SK-N-SH (cell line): ENCODE measurements at regions of chr19 and their contacts with region 1.

Region 1: DNA sequence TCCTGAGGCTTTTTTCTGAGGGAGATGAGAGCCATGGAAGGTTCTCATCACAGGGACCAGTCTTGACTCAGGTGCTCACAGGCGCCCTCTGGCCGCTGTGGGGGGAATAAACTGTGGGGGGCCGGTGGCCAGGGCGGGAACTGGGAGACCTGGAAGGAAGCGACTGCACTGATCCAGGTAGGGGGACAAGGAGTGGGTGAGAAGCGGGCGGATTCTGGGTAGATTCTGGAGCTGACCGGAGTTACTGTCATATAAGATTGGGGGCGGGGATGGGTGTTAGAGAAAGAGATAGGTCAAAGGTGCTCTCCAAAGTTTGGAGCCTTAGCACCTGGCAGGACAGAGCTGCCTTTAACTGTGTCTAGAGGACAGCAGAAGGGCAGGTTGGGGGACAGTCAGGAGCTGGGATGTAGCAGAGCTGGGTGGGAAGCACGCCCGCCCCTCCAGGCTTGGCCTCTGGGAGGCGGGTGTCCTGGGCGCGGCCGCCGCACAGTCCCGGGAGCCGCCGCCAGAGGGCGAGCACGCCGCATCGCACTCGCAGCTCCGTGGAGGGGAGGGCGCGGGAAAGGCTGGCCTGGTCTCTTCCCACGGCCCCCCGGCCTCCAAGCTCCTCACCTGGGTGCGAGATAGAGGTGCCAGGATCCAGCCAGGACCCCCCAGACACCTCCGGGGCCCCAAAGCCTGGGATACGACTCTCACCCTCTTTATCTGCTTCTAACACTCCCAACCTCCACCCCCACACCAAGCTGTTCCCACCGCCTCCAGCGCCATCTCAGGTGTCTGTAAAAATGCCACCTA is 4.2 kb upstream of the DAND5 start:
- DNase-seq: peak; percentile 89
- H3K4me3 ChIP-seq: peak overlapping the region; percentile 48 to 63
- H3K27ac ChIP-seq: peak overlapping the region; percentile 59 to 75
- H3K4me1 ChIP-seq: peaks cover 6 to 14% of the 10 kb centered on the region in 2 experiments; a peak in 3 of 4 replicates
- H3K27me3 ChIP-seq: no peaks in the 10 kb centered on the region
- CTCF ChIP-seq: peak; percentile 78
- EP300 ChIP-seq: no peak
- RAD21 ChIP-seq: peak; percentile 79

Region 2: GRCh38 chr19:12821761-12822160 is 143.5 kb before region 1 on chr19:
- CTCF ChIA-PET with region 1: no interaction called
- POLR2A ChIA-PET with region 1: no interaction called
- DNase-seq: no peak
- H3K4me3 ChIP-seq: no peak overlapping the region
- H3K27ac ChIP-seq: no peak overlapping the region
- H3K4me1 ChIP-seq: no peaks in the 10 kb centered on the region; a peak in 1 of 4 replicates
- H3K27me3 ChIP-seq: no peaks in the 10 kb centered on the region
- CTCF ChIP-seq: no peak
- EP300 ChIP-seq: no peak
- RAD21 ChIP-seq: no peak

Region 3: GRCh38 chr19:12868540-12869098 is 96.6 kb before region 1 on chr19:
- CTCF ChIA-PET with region 1: no interaction called
- POLR2A ChIA-PET with region 1: no interaction called
- DNase-seq: peak; percentile 63
- H3K4me3 ChIP-seq: no peak overlapping the region
- H3K27ac ChIP-seq: no peak overlapping the region
- H3K4me1 ChIP-seq: no peaks in the 10 kb centered on the region
- H3K27me3 ChIP-seq: no peaks in the 10 kb centered on the region
- CTCF ChIP-seq: no peak
- EP300 ChIP-seq: no peak
- RAD21 ChIP-seq: no peak

Region 4: DNA sequence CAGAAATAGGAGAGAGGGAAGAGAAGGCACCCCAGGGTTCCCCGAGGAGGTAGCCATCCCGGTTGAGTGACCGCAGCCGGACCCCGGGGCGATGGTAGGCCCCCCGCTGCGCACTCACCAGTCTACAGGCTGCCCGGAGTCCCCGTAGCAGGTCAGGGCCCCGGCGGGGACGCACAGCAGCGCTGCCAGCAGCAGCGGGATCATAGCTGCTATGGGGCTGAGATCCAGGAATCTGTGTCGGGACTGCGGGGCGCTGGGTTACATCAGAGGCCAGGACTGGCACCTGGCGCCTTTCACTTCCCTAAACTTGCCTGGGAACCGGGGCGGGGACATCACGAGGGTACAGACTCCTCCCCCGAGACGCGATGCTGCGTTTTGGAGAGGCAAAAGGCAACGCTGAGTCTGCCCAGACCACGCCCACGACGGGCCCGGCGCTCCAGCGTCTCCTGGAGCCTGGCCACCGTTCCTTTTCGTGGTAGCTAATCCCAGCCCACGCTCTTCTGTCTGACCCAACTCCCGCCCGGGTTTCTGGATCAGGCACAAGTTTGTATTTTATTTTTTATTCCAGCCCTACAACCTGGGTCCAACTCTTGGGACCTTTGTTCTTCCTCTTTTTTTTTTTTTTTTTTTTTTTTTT is 83.9 kb before region 1 on chr19 and contains the start of gene DNASE2:
- CTCF ChIA-PET with region 1: interaction called, 28 read pairs
- POLR2A ChIA-PET with region 1: interaction called, 4 read pairs
- DNase-seq: peak; percentile 95
- H3K4me3 ChIP-seq: peak within 1 kb of the TSS; percentile 68 to 86
- H3K27ac ChIP-seq: peak within 1 kb of the TSS; percentile 71 to 76
- H3K4me1 ChIP-seq: peaks cover 0 to 9% of the 10 kb centered on the region in 2 experiments; a peak in 1 of 4 replicates
- H3K27me3 ChIP-seq: peaks cover 11% of the 10 kb centered on the region; the same call in 1 of the 2 replicates
- CTCF ChIP-seq: no peak
- EP300 ChIP-seq: no peak
- RAD21 ChIP-seq: no peak
- polyA plus RNA-seq, gene DNASE2: 29.8 and 40.7 TPM in 2 replicates

Region 5: GRCh38 chr19:12983542-12984142 is 18.4 kb after region 1 on chr19:
- CTCF ChIA-PET with region 1: interaction called, 256 read pairs
- POLR2A ChIA-PET with region 1: no interaction called
- DNase-seq: peak; percentile 98
- H3K4me3 ChIP-seq: peak overlapping the region; percentile 34 to 39; a peak in 3 of 4 replicates
- H3K27ac ChIP-seq: peak overlapping the region in 1 of 2 experiments; percentile 2; a peak in 1 of 4 replicates
- H3K4me1 ChIP-seq: peaks cover 0 to 8% of the 10 kb centered on the region in 2 experiments; a peak in 1 of 4 replicates
- H3K27me3 ChIP-seq: no peaks in the 10 kb centered on the region
- CTCF ChIP-seq: peak; percentile 88
- EP300 ChIP-seq: no peak
- RAD21 ChIP-seq: peak; percentile 82

Region 6: DNA sequence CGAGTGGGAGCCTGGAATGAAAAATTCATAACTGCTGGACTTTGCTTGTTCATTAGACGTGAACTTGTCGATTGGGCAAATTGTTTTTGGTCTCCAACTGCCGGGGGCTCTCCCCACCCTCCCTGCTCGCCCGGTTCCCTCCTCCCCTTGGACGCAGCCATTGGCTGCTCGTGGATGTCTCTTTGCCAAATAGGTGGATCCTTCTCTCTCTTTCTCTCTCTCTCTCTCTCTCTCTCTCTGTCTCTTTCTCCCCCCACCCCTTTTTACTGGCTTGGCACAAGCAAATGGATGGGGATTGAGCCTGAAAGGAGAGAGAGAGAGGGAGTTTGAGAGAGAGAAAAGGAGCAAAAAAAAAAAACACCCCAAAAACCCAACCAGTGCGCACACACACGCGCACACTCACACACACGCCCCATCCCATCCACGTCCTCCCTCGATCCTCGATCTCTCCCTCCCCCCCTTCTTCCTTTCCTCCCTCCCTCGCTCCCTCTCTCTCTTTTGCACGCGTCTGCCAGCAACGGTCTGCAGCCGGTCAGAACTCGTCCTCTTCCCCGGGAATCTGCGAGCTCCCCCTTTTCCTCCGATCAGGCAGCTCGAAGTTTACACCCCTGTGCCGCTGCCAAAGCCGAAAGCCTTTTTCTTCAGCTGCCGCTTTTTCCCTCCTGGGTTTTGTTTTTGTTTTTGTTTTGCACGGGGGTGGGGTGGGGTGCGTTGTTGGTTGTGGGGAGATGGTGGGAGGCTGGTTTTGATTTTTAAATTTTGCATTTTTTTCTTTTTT is 57.8 kb after region 1 on chr19:
- CTCF ChIA-PET with region 1: interaction called, 12 read pairs
- POLR2A ChIA-PET with region 1: no interaction called
- DNase-seq: peak; percentile 87
- H3K4me3 ChIP-seq: peak overlapping the region; percentile 36 to 67
- H3K27ac ChIP-seq: peak overlapping the region; percentile 82 to 91
- H3K4me1 ChIP-seq: peaks cover 31 to 57% of the 10 kb centered on the region in 2 experiments
- H3K27me3 ChIP-seq: no peaks in the 10 kb centered on the region
- CTCF ChIP-seq: peak; percentile 19; the same call in 1 of the 2 replicates
- EP300 ChIP-seq: peak in 1 of 2 experiments; percentile 22; a peak in 2 of 4 replicates
- RAD21 ChIP-seq: no peak

Region 7: DNA sequence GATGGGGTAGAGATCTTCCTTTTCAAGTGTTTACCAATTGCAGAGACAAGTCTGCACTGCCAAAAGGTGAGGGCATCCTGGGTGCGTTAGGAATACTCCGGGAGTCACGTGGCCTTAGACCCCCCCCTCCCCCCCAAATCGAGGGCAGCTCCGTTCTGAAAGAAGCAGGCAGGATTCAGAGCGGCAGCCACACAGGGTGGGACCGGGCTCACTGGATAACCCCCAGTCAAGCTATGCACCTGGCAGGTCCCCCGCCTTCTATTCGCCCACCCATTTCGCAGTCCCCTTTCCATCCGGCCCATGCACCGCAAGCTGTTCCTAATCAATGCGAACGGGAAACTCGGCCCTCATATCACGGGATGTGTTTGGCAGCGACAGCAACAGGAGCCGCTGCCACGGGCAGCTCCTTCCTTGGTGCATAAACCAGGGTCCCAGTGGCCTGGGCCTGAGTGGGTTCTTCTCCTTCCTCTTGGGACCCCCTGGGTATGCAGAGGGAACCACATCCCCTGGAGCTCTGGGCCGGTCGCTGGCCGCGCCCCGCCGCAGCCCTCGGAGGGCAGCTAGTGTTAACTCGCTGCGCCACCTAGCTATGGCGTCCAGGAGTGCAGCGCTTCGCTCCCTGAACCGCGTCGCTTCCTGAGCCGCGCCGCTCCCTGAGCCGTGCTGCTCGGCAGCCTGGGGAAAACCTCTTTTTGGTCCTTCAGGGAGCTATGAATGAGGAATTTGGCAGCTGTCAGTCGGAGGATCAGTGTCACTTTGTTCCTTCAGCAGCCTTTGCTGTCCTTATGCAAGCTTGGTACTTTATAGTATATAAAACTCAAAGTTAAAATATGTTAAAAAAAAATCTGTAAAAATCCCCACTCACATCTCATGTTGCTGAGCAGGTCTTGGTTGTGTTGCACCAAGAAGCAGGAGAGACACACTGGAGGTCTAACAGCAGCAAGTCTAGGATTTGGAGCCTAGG is 96.0 kb after region 1 on chr19:
- CTCF ChIA-PET with region 1: interaction called, 144 read pairs
- POLR2A ChIA-PET with region 1: interaction called, 6 read pairs
- DNase-seq: peak; percentile 92
- H3K4me3 ChIP-seq: peak overlapping the region; percentile 37 to 58; a peak in 3 of 4 replicates
- H3K27ac ChIP-seq: peak overlapping the region; percentile 52 to 85; a peak in 3 of 4 replicates
- H3K4me1 ChIP-seq: peaks cover 49 to 89% of the 10 kb centered on the region in 2 experiments
- H3K27me3 ChIP-seq: no peaks in the 10 kb centered on the region
- CTCF ChIP-seq: peak; percentile 94
- EP300 ChIP-seq: no peak
- RAD21 ChIP-seq: peak; percentile 91

Region 8: GRCh38 chr19:13093407-13094105 is 128.3 kb after region 1 on chr19:
- CTCF ChIA-PET with region 1: interaction called, 603 read pairs
- POLR2A ChIA-PET with region 1: interaction called, 6 read pairs
- DNase-seq: peak; percentile 92
- H3K4me3 ChIP-seq: no peak overlapping the region; a peak in 1 of 4 replicates
- H3K27ac ChIP-seq: peak overlapping the region; percentile 27 to 99; a peak in 3 of 4 replicates
- H3K4me1 ChIP-seq: peaks cover 19 to 76% of the 10 kb centered on the region in 2 experiments
- H3K27me3 ChIP-seq: no peaks in the 10 kb centered on the region
- CTCF ChIP-seq: peak; percentile 88
- EP300 ChIP-seq: no peak
- RAD21 ChIP-seq: peak; percentile 98